CD4-positive, alpha-beta memory T cell (primary cell): ENCODE measurements at regions of chr20 and their contacts with region 1.

Region 1: DNA sequence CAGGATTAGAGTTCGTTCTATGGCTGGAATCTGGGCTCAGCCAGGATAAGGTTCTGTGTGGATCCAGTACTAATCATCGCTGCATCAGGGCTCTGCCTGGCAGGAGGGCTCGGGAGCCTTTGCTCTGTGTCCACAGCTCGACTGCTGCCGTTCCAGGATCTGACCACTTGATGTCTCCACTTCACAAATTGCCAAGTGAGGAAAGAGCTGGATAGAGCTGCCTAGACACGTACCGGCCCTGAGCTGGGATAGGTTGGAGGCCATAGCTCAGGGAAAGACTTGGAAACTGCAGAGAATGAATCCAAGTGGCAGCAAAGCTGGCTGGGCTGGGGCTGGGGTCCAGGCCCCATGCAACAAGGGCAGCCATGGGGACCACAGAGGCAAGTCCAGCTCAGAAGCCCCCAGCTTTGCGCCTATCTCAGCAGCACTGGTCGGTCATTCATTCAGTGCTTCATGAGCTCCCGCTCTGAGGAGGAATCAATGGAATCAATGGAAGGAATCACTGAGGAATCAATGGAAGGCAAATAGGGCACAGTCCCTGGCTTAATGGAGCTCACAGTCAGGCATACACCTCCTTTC is 38.0 kb upstream of the TOP1 start:
- DNase-seq: peak; percentile 54 to 62 (median 56)
- H3K4me3 ChIP-seq: no peak overlapping the region
- H3K4me3 Mint-ChIP-seq: peak overlapping the region in 3 of 8 donors; percentile 21 to 56 (median 34)
- H3K27ac ChIP-seq: no peak overlapping the region
- H3K27ac Mint-ChIP-seq: peak overlapping the region in 6 of 7 donors; percentile 7 to 77 (median 50)
- H3K4me1 ChIP-seq: peaks cover 31% of the 10 kb centered on the region
- H3K4me1 Mint-ChIP-seq: peaks cover 23 to 36% (median 29%) of the 10 kb centered on the region in 4 donors
- H3K27me3 ChIP-seq: no peaks in the 10 kb centered on the region
- H3K27me3 Mint-ChIP-seq: no peaks in the 10 kb centered on the region

Region 2: GRCh38 chr20:40962730-40963504 is 27.7 kb before region 1 on chr20:
- CTCF ChIA-PET with region 1: interaction called, 93 read pairs
- POLR2A ChIA-PET with region 1: no interaction called
- intact Hi-C with region 1: loop called (anchors 1 kb)
- DNase-seq: peak; percentile 64 to 68 (median 65)
- H3K4me3 ChIP-seq: no peak overlapping the region
- H3K4me3 Mint-ChIP-seq: peak overlapping the region in 1 of 8 donors; percentile 4
- H3K27ac ChIP-seq: no peak overlapping the region
- H3K27ac Mint-ChIP-seq: no peak overlapping the region
- H3K4me1 ChIP-seq: peaks cover 16% of the 10 kb centered on the region
- H3K4me1 Mint-ChIP-seq: peaks cover 7 to 13% (median 8%) of the 10 kb centered on the region in 4 donors
- H3K27me3 ChIP-seq: no peaks in the 10 kb centered on the region
- H3K27me3 Mint-ChIP-seq: peaks cover 0 to 3% of the 10 kb centered on the region in 2 donors

Region 3: DNA sequence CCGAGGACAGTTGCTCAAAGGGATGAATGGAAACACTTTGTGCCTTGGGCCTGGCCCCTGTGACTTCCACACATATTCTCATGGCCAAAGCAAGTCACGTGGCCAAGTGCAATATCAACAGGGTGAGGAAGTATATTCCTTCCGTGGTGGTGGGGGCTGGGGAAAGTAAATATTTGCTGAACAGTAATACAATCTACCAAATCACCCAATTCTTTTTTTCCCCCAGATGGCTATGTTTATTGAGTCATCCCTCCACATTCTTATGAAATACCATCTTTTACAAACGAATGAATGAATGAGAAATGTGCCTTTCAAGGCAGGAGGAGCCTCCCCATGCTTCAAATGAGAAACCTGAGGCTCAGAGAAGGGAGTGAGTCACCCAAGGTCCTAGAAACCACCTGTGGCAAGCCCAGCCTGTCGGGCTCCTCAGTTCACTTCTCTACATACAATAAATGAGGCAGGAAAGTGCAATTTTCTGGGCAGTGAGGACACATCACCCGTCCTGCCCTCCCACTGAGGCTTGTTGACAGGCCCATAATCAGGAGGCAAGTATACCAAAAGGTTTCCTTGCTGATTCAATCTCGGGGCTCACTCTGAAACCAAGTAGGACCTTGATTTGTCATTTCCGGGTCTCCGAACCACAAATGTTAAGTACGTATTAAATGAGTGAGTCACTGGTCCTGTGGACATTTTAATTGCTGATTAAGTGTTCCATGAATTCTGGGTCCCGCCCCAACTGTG is 12.7 kb after region 1 on chr20:
- CTCF ChIA-PET with region 1: interaction called, 28 read pairs
- POLR2A ChIA-PET with region 1: interaction called, 4 read pairs
- intact Hi-C with region 1: no loop called
- DNase-seq: peak; percentile 76 to 91 (median 83)
- H3K4me3 ChIP-seq: peak overlapping the region; percentile 19 to 60
- H3K4me3 Mint-ChIP-seq: peak overlapping the region; percentile 78 to 90 (median 82)
- H3K27ac ChIP-seq: peak overlapping the region; percentile 72
- H3K27ac Mint-ChIP-seq: peak overlapping the region; percentile 95 to 99 (median 97)
- H3K4me1 ChIP-seq: peaks cover 13% of the 10 kb centered on the region
- H3K4me1 Mint-ChIP-seq: peaks cover 16 to 41% (median 22%) of the 10 kb centered on the region in 4 donors
- H3K27me3 ChIP-seq: no peaks in the 10 kb centered on the region
- H3K27me3 Mint-ChIP-seq: no peaks in the 10 kb centered on the region

Region 4: DNA sequence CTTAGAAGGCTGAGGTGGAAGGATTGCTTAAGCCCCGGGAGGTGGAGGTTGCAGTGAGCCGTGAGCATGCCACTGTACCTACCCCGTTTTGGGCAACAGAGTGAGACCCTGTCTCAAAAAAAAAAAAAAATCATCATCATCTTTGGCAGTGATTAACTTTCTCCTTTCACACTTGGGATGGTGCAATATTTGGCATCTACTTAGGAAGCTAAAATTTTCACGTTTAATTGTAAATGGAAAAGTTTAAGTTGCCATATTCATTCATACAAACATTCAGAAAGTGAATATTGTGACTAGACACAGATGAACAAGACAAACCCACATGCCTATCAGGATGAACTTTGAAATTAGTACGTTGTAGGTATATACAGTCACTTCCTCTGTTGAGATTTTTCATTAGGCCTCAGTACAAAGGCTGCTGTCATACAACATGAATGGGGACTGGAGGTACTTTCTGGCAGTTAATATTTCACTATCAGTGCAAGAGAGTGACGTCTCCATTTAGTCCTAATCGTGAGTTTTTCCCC is 48.3 kb after region 1 on chr20:
- CTCF ChIA-PET with region 1: interaction called, 14 read pairs
- POLR2A ChIA-PET with region 1: interaction called, 4 read pairs
- intact Hi-C with region 1: no loop called
- DNase-seq: no peak
- H3K4me3 ChIP-seq: no peak overlapping the region
- H3K4me3 Mint-ChIP-seq: peak overlapping the region in 1 of 8 donors; percentile 25
- H3K27ac ChIP-seq: no peak overlapping the region
- H3K27ac Mint-ChIP-seq: peak overlapping the region in 2 of 7 donors; percentile 24 to 37
- H3K4me1 ChIP-seq: peaks cover 100% of the 10 kb centered on the region
- H3K4me1 Mint-ChIP-seq: peaks cover 57 to 97% (median 78%) of the 10 kb centered on the region in 4 donors
- H3K27me3 ChIP-seq: no peaks in the 10 kb centered on the region
- H3K27me3 Mint-ChIP-seq: no peaks in the 10 kb centered on the region

Region 5: GRCh38 chr20:41078329-41078728 is 87.7 kb after region 1 on chr20:
- CTCF ChIA-PET with region 1: interaction called, 31 read pairs
- POLR2A ChIA-PET with region 1: no interaction called
- intact Hi-C with region 1: no loop called
- DNase-seq: peak in 2 of 5 donors; percentile 6 to 8
- H3K4me3 ChIP-seq: no peak overlapping the region
- H3K4me3 Mint-ChIP-seq: peak overlapping the region in 4 of 8 donors; percentile 7 to 46 (median 26)
- H3K27ac ChIP-seq: no peak overlapping the region
- H3K27ac Mint-ChIP-seq: peak overlapping the region; percentile 38 to 85 (median 68)
- H3K4me1 ChIP-seq: peaks cover 49% of the 10 kb centered on the region
- H3K4me1 Mint-ChIP-seq: peaks cover 39 to 68% (median 52%) of the 10 kb centered on the region in 4 donors
- H3K27me3 ChIP-seq: no peaks in the 10 kb centered on the region
- H3K27me3 Mint-ChIP-seq: no peaks in the 10 kb centered on the region

Region 6: GRCh38 chr20:41119546-41120235 is 129.1 kb after region 1 on chr20:
- CTCF ChIA-PET with region 1: interaction called, 13 read pairs
- POLR2A ChIA-PET with region 1: no interaction called
- intact Hi-C with region 1: no loop called
- DNase-seq: no peak
- H3K4me3 ChIP-seq: no peak overlapping the region
- H3K4me3 Mint-ChIP-seq: no peak overlapping the region
- H3K27ac ChIP-seq: no peak overlapping the region
- H3K27ac Mint-ChIP-seq: peak overlapping the region in 1 of 7 donors; percentile 29
- H3K4me1 ChIP-seq: no peaks in the 10 kb centered on the region
- H3K4me1 Mint-ChIP-seq: peaks cover 5 to 15% (median 9%) of the 10 kb centered on the region in 4 donors
- H3K27me3 ChIP-seq: no peaks in the 10 kb centered on the region
- H3K27me3 Mint-ChIP-seq: no peaks in the 10 kb centered on the region

Region 7: DNA sequence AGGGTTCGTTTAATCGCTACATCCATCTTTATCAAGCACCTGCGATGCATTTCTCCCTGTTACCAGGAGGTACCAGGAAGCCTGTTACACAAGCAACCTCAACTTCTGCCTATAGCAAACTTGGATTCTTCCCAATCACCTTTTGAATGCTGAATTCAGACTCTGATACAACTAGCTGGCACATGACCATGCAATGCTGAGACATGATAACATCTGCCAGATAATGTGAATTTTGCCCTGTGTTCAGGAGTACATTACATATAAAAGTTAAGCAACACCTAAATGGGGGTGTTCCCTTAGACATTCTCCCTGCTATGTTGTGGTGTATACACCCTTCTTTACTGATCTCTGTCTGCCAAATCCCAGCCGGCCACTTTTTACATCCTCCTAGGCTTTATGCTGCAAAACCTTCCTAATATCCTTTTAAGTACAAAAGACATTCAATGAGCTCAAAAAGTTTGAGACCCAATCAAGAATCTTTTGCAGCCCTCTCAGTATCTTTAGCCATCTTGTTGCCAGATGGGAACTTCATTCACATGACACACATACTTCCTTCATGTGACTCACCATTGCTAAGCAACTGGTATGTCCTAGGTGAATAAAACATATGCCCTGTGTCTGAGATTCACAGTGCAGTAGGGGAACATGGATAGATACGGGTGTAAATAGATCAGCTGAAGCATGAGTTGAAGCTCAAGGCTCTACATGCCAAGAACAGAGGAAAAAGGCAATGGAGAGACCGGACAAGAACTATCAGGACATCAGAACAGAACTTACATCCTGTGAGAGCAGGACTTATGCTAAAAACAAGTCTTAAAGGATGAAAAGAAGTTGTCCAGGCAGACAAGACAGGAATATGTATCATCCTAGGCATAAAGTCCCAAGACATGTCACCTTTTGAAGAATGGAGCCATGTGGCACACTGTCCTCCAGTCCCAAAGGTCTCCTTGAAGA is 242.6 kb after region 1 on chr20:
- CTCF ChIA-PET with region 1: interaction called, 21 read pairs
- POLR2A ChIA-PET with region 1: interaction called, 3 read pairs
- intact Hi-C with region 1: no loop called
- DNase-seq: no peak
- H3K4me3 ChIP-seq: no peak overlapping the region
- H3K4me3 Mint-ChIP-seq: peak overlapping the region in 1 of 8 donors; percentile 70
- H3K27ac ChIP-seq: no peak overlapping the region
- H3K27ac Mint-ChIP-seq: peak overlapping the region in 2 of 7 donors; percentile 35 to 54
- H3K4me1 ChIP-seq: peaks cover 7% of the 10 kb centered on the region
- H3K4me1 Mint-ChIP-seq: peaks cover 8 to 24% (median 14%) of the 10 kb centered on the region in 4 donors
- H3K27me3 ChIP-seq: no peaks in the 10 kb centered on the region
- H3K27me3 Mint-ChIP-seq: no peaks in the 10 kb centered on the region